ENCODE measurements at regions of chr15 and their contacts with region 1.

Region 1: DNA sequence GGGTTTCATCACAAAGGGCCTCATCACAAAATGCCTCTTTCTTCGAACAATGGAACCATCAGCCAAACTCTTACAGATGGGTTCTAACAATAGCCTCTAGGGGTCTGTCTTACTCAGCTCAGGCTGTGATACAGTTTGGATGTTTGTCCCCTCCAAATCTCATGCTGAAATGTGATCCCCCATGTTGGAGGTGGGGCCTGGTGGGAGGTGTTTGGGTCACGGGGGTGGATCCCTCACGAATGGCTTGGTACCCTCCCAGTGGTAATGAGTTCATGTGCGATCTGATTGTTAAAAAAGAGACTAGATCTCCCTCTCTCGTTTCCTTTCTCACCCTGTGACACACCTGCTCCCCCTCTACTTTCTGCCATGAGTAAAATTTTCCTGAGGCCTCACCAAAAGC is 47.9 kb upstream of the LIPC start:
- DNase-seq: no peak
- ATAC-seq: no peak
- H3K4me3 ChIP-seq: no peak overlapping the region
- H3K27ac ChIP-seq: no peak overlapping the region
- H3K4me1 ChIP-seq: no peaks in the 10 kb centered on the region
- H3K27me3 ChIP-seq: no peaks in the 10 kb centered on the region
- CTCF ChIP-seq: no peak

Region 2: GRCh38 chr15:58423205-58423604 is 39.3 kb after region 1 on chr15:
- intact Hi-C with region 1: no loop called
- DNase-seq: no peak
- ATAC-seq: no peak
- H3K4me3 ChIP-seq: no peak overlapping the region
- H3K27ac ChIP-seq: no peak overlapping the region
- H3K4me1 ChIP-seq: no peaks in the 10 kb centered on the region
- H3K27me3 ChIP-seq: no peaks in the 10 kb centered on the region
- CTCF ChIP-seq: no peak

Region 3: DNA sequence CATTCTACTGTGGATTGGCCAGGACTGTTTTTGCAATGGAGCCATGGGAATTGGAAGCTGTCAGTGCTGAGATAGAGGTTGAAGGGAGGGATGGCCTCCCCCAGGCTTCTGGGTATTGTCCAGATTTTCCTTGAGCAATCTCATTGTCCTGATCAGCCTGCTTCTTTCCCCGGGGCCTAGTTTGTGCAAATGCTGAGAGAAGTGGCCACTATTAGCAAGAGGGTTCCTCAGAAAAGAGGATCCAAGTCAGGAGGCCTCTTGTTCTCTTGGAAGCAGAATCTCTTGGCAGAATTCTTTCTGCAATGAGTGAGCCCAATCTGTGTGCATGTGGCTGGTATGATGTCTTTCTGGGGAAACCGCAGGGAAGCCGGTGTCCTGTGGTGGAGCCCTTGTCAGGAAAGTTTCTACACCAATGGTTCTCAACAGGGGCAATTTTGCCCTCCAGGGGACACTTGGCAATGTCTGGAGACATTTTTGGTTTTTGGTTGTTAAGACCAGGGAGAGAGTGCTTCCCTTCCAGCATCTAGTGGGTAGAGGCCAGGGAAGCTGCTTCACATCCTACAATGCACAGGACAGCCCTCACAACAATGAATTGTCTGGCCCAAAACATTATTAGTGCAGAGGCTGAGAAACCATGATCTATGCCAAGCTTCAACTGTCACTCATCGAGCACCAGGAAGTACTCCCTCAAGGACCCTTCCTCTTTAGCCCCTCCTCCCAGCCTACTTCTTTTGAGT is 49.9 kb after region 1 on chr15:
- intact Hi-C with region 1: loop called in 1 of 2 experiments (anchors 5 kb)
- DNase-seq: no peak
- ATAC-seq: peak in 2 of 4 donors; percentile 40 to 47
- H3K4me3 ChIP-seq: no peak overlapping the region
- H3K27ac ChIP-seq: no peak overlapping the region
- H3K4me1 ChIP-seq: peaks cover 11% of the 10 kb centered on the region
- H3K27me3 ChIP-seq: no peaks in the 10 kb centered on the region
- CTCF ChIP-seq: no peak

Measured in psoas muscle (tissue), 8 donors.